RWPE1 (cell line): ENCODE measurements at regions of chr6 and their contacts with region 1.

Region 1: GRCh38 chr6:70369332-70369950 is 43.9 kb upstream of the FAM135A start:
- DNase-seq: peak; percentile 66
- H3K27ac ChIP-seq: no peak overlapping the region
- CTCF ChIP-seq: peak; percentile 87

Region 2: DNA sequence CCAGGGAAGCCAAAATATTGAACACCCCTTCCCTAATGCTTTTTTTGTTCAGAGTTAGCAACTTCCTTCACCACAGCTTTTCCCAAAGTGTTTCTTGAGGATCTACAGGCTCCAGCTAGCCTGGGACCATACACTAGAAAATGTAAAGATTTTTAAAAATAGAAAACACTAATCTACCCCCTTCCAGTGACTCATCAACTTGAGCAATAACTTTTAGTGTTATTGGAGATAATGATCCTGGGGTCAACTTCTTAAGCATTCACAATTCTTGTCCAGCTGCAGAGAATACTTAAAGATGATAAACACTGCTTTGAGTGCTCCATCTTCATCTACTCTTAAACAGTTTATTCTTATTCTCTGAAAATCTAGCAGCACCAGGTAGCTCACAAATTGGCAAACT is 198.2 kb before region 1 on chr6:
- CTCF ChIA-PET with region 1: no interaction called
- POLR2A ChIA-PET with region 1: no interaction called
- DNase-seq: no peak
- H3K27ac ChIP-seq: no peak overlapping the region
- CTCF ChIP-seq: no peak

Region 3: DNA sequence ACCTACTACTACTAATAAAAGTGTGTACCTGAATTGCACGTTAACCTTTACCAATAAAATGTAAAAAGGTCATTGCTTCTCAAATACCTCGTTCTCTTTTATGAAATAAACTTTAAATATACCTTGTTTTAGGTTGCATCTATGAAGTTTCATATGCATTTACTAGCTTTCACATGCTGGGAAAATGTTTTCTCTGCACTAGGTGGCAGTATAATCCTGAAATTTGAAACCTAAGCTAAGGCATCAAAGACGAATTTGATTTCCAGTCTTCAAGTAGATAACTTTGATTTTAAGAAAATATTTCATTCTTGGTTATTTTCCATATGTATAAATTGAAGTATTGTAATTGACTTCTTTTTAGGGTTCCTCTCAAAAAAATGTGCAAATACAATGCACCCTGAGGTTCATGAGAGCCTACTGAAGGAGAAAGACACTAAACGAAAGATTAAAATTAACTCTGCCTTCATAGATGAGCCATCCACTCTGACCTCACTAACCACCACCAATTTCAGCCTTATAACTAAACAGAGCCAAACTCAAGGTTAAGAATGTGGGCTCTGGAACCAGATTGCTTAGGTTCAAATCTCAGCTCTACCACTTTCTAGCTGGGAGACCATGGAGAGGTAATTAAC is 59.3 kb before region 1 on chr6:
- CTCF ChIA-PET with region 1: interaction called, 26 read pairs
- POLR2A ChIA-PET with region 1: interaction called, 3 read pairs
- DNase-seq: peak; percentile 8
- H3K27ac ChIP-seq: no peak overlapping the region
- CTCF ChIP-seq: peak; percentile 68

Region 4: DNA sequence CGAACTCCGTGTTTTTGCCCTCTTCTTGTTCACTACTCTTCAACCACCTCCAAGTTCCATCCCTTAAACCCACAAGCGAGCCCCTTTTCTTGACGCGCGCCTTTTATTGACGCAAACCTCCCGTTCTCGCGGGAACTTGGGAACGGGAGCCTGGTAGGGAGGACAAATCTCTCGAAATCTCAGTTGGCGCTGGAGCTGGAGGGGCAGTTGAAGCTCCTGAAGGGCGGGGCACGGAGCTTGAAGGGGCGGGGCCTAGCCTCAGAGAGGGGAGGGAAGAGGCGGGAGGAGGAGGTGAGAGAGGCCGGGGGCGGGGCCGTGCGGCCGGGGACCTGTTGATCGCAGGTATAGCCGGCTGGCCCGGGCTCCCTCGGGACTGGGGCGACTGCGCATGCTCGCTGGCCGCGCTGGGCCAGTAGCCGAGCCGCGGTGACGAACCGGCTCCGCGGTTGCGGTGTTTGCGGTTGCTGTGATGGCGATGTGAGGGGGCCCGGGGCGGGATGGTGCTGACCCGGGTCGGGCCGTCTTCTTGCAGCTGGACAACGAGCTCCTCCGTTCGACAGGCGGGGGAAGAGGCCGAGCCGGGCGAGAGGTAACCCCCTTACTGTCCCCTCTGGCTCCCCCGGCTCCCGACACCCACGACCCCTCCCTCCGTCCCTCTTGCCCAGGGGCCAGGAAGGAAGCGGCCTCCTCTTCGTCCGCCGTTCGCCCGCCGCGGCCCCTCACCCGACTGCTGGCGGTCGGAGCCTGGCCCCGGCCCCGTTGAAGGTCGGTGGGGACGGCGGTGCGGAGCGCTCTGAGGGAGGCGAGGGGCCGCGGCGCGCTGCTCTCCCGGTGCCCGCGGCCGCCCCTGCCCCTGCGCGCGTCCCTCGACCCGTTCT is 43.9 kb after region 1 on chr6 and contains the start of gene FAM135A:
- CTCF ChIA-PET with region 1: interaction called, 18 read pairs
- POLR2A ChIA-PET with region 1: no interaction called
- DNase-seq: peak; percentile 97
- H3K27ac ChIP-seq: peak within 1 kb of the TSS; percentile 82
- CTCF ChIP-seq: no peak